Pancreas (tissue), 10 donors: ENCODE measurements at regions of chr1 and their contacts with region 1.

Region 1: GRCh38 chr1:62746085-62746808 is 37.7 kb upstream of the ATG4C start:
- DNase-seq: no peak
- ATAC-seq: peak; percentile 61 to 81 (median 76)
- H3K4me3 ChIP-seq: no peak overlapping the region
- H3K27ac ChIP-seq: no peak overlapping the region
- H3K4me1 ChIP-seq: no peaks in the 10 kb centered on the region
- H3K27me3 ChIP-seq: no peaks in the 10 kb centered on the region
- CTCF ChIP-seq: peak in 3 of 4 donors; percentile 34 to 47 (median 37)

Region 2: GRCh38 chr1:62508187-62508758 is 238.0 kb before region 1 on chr1:
- intact Hi-C with region 1: loop called in 1 of 3 experiments (anchors 10 kb)
- DNase-seq: peak in 1 of 6 donors; percentile 14
- ATAC-seq: peak in 3 of 4 donors; percentile 52 to 67 (median 64)
- H3K4me3 ChIP-seq: no peak overlapping the region
- H3K27ac ChIP-seq: no peak overlapping the region
- H3K4me1 ChIP-seq: no peaks in the 10 kb centered on the region
- H3K27me3 ChIP-seq: no peaks in the 10 kb centered on the region
- CTCF ChIP-seq: peak in 3 of 4 donors; percentile 25 to 27 (median 26)

Region 3: DNA sequence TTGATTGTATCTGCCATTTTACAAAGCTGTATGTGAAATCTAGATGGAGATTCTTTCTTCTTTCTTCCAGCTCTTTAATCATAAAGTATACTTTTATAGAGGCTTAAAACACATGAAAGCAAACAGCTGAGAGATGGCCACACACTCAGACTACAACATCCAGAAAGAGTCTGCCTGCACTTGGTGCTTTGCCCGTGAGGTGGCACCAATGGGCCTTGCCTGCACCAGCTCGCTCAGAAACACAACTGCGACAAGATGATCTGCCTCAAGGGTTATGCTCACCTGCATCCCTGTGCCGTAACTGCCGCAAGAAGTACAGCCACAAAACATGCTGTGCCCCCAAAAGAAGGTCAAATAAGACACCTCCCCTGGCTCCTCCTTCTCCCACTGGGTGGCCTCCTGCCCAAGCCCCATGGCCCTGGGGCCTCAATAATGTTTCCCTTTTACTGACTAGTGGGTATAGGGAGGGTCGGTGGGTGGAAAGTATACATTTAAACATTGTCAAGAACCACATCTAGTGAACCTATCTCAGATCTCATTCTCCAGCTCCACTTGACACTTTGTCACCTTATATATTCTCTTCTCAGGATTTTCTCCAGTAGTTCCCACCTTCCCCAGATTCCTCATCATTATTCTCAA is 215.6 kb before region 1 on chr1:
- intact Hi-C with region 1: loop called in 1 of 3 experiments (anchors 10 kb)
- DNase-seq: peak; percentile 29 to 79 (median 60)
- ATAC-seq: peak; percentile 71 to 98 (median 96)
- H3K4me3 ChIP-seq: no peak overlapping the region
- H3K27ac ChIP-seq: no peak overlapping the region
- H3K4me1 ChIP-seq: no peaks in the 10 kb centered on the region
- H3K27me3 ChIP-seq: no peaks in the 10 kb centered on the region
- CTCF ChIP-seq: peak in 3 of 4 donors; percentile 45 to 61 (median 50)

Region 4: DNA sequence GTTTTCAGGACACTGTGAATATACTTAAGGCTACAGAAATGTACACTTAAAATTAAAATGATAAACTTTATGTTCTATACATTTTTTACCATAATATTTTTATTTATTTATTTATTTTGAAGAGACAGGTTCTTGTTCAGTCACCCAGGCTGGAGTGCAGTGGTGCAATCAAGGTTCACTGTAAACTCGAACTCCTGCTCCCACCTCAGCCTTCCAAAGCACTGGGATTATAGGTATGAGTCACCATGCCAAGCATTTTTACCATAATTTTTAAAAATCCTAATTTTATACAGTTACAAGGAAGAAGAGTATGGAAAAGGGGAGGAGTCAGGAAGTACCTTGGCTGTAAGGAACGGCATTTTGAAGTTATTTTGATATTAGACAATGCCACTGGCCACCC is 172.6 kb before region 1 on chr1:
- intact Hi-C with region 1: no loop called
- DNase-seq: no peak
- ATAC-seq: no peak
- H3K4me3 ChIP-seq: no peak overlapping the region
- H3K27ac ChIP-seq: no peak overlapping the region
- H3K4me1 ChIP-seq: no peaks in the 10 kb centered on the region
- H3K27me3 ChIP-seq: no peaks in the 10 kb centered on the region
- CTCF ChIP-seq: no peak

Region 5: GRCh38 chr1:62951428-62951827 is 205.2 kb after region 1 on chr1:
- intact Hi-C with region 1: no loop called
- DNase-seq: no peak
- ATAC-seq: no peak
- H3K4me3 ChIP-seq: no peak overlapping the region
- H3K27ac ChIP-seq: no peak overlapping the region
- H3K4me1 ChIP-seq: no peaks in the 10 kb centered on the region
- H3K27me3 ChIP-seq: no peaks in the 10 kb centered on the region
- CTCF ChIP-seq: no peak